ENCODE measurements at regions of chr7 and their contacts with region 1.

Region 1: DNA sequence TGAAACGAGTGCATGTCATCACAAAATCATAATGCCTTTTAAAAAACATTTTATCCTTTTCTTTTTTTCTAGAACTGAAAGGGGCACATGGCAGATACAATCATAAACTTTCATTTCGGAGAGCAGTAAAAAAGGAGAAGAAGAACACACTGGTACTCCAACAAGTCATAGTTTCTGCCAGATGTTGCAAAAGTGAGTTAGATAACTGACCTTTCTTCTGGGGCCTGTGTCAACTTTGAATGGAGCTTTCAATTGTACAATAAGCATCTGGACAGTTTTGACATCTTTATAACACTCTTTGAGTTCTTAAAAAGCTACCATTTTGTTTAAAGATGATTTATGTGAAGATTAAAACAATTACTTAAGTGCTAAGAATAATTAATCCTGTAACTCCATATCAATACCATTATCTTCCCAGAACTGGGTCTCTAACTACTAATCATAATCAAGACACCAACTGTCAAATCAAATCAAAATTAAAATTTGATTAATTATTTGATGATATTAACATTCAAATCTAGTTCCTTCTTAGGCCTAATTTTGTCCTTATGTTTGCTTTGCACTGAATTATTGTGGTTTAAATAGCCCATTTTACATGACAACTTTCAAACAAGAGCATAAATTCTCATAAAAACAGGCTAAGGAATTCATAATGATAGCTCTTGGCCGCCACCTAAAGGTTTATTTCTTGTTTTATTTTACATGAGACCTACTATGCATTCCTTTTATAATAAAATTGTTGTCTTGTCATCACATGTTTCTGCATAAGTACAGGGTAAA is 19.5 kb upstream of the ITGB8 start:
- DNase-seq: peak; percentile 72
- ATAC-seq: peak; percentile 45
- H3K4me3 ChIP-seq: no peak overlapping the region
- H3K4me3 Mint-ChIP-seq: no peak overlapping the region
- H3K27ac ChIP-seq: no peak overlapping the region
- H3K27ac Mint-ChIP-seq: no peak overlapping the region
- H3K4me1 ChIP-seq: peaks cover 0 to 3% of the 10 kb centered on the region in 2 donors
- H3K4me1 Mint-ChIP-seq: peaks cover 13% of the 10 kb centered on the region
- H3K27me3 ChIP-seq: no peaks in the 10 kb centered on the region
- H3K27me3 Mint-ChIP-seq: no peaks in the 10 kb centered on the region
- CTCF ChIP-seq: peak; percentile 79

Region 2: DNA sequence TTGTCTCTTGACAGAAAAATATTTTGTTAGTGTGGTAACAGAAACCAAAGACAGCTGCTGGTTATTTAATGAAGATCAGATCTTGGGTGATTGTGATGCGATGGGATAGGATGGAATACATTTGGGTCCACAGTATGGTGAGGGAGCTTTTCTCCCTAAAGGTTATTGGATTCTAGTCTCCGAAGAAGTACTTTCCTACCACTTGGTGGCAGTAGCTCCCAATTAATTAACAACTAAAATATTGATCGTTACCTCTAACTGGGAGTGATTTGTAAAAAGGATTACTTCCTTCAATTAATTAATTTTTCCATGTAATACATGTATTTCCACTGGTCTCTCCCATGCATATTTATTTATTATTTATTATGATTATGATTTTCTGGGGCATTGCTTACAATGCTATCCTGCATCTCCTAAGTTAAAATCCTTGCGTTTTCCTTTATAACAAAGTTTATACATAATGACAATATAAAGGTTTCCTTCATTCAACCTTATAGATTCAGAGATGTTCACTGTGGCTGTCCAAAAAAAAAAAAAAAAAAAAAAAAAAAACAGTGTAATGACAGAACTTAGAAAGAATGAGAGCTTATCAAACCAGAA is 563.3 kb before region 1 on chr7:
- CTCF ChIA-PET with region 1: interaction called, 13 read pairs
- POLR2A ChIA-PET with region 1: no interaction called
- intact Hi-C with region 1: loop called (anchors 1 kb)
- DNase-seq: peak; percentile 43
- ATAC-seq: no peak
- H3K4me3 ChIP-seq: no peak overlapping the region
- H3K4me3 Mint-ChIP-seq: no peak overlapping the region
- H3K27ac ChIP-seq: no peak overlapping the region
- H3K27ac Mint-ChIP-seq: no peak overlapping the region
- H3K4me1 ChIP-seq: no peaks in the 10 kb centered on the region
- H3K4me1 Mint-ChIP-seq: no peaks in the 10 kb centered on the region
- H3K27me3 ChIP-seq: no peaks in the 10 kb centered on the region
- H3K27me3 Mint-ChIP-seq: peaks cover 4% of the 10 kb centered on the region
- CTCF ChIP-seq: peak; percentile 76

Region 3: GRCh38 chr7:19982841-19983835 is 328.0 kb before region 1 on chr7:
- CTCF ChIA-PET with region 1: interaction called, 67 read pairs
- POLR2A ChIA-PET with region 1: no interaction called
- intact Hi-C with region 1: loop called (anchors 1 kb)
- DNase-seq: peak; percentile 55
- ATAC-seq: no peak
- H3K4me3 ChIP-seq: no peak overlapping the region
- H3K4me3 Mint-ChIP-seq: no peak overlapping the region
- H3K27ac ChIP-seq: no peak overlapping the region
- H3K27ac Mint-ChIP-seq: no peak overlapping the region
- H3K4me1 ChIP-seq: no peaks in the 10 kb centered on the region
- H3K4me1 Mint-ChIP-seq: no peaks in the 10 kb centered on the region
- H3K27me3 ChIP-seq: no peaks in the 10 kb centered on the region
- H3K27me3 Mint-ChIP-seq: no peaks in the 10 kb centered on the region
- CTCF ChIP-seq: peak; percentile 47

Region 4: DNA sequence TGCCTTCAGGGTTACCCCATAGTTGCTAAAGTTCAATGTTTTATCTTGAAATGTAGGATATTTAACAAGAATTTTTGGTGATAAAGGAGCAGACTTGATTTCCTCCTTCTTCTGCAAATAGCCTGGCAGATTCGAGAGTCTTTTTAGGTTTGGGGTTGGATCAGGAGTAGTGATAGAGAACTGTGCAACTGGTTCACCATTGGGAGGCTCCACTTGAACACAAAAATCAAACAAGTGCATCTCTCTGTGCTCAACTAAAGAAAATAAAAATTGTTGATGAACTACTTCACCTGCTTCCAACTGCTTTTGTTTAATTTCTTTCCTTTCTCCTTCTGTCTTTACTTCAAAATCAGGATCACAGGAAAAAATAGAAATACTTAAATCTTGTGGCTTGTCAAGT is 152.5 kb before region 1 on chr7:
- CTCF ChIA-PET with region 1: interaction called, 76 read pairs
- POLR2A ChIA-PET with region 1: no interaction called
- intact Hi-C with region 1: loop called (anchors 1 kb)
- DNase-seq: peak; percentile 42
- ATAC-seq: peak; percentile 28
- H3K4me3 ChIP-seq: no peak overlapping the region
- H3K4me3 Mint-ChIP-seq: no peak overlapping the region
- H3K27ac ChIP-seq: no peak overlapping the region
- H3K27ac Mint-ChIP-seq: no peak overlapping the region
- H3K4me1 ChIP-seq: no peaks in the 10 kb centered on the region
- H3K4me1 Mint-ChIP-seq: peaks cover 5% of the 10 kb centered on the region
- H3K27me3 ChIP-seq: no peaks in the 10 kb centered on the region
- H3K27me3 Mint-ChIP-seq: no peaks in the 10 kb centered on the region
- CTCF ChIP-seq: peak; percentile 29

Region 5: GRCh38 chr7:20219446-20220292 is 91.5 kb before region 1 on chr7:
- CTCF ChIA-PET with region 1: interaction called, 20 read pairs
- POLR2A ChIA-PET with region 1: no interaction called
- intact Hi-C with region 1: loop called (anchors 2 kb)
- DNase-seq: peak; percentile 93
- ATAC-seq: peak; percentile 77
- H3K4me3 ChIP-seq: peak overlapping the region in 4 of 5 experiments; percentile 15 to 55 (median 26)
- H3K4me3 Mint-ChIP-seq: peak overlapping the region; percentile 80
- H3K27ac ChIP-seq: peak overlapping the region; percentile 88
- H3K27ac Mint-ChIP-seq: peak overlapping the region; percentile 94
- H3K4me1 ChIP-seq: peaks cover 45 to 53% of the 10 kb centered on the region in 2 donors
- H3K4me1 Mint-ChIP-seq: peaks cover 61% of the 10 kb centered on the region
- H3K27me3 ChIP-seq: no peaks in the 10 kb centered on the region
- H3K27me3 Mint-ChIP-seq: no peaks in the 10 kb centered on the region
- CTCF ChIP-seq: no peak

Region 6: GRCh38 chr7:20598459-20599309 is 287.5 kb after region 1 on chr7:
- CTCF ChIA-PET with region 1: interaction called, 7 read pairs
- POLR2A ChIA-PET with region 1: no interaction called
- intact Hi-C with region 1: loop called (anchors 5 kb)
- DNase-seq: peak; percentile 70
- ATAC-seq: peak; percentile 63
- H3K4me3 ChIP-seq: no peak overlapping the region
- H3K4me3 Mint-ChIP-seq: no peak overlapping the region
- H3K27ac ChIP-seq: no peak overlapping the region
- H3K27ac Mint-ChIP-seq: no peak overlapping the region
- H3K4me1 ChIP-seq: peaks cover 3% of the 10 kb centered on the region in 2 donors
- H3K4me1 Mint-ChIP-seq: peaks cover 2% of the 10 kb centered on the region
- H3K27me3 ChIP-seq: peaks cover 0 to 11% (median 7%) of the 10 kb centered on the region in 4 experiments
- H3K27me3 Mint-ChIP-seq: peaks cover 19% of the 10 kb centered on the region
- CTCF ChIP-seq: peak; percentile 89

Region 7: GRCh38 chr7:21383227-21384220 is 1072.4 kb after region 1 on chr7:
- CTCF ChIA-PET with region 1: no interaction called
- POLR2A ChIA-PET with region 1: no interaction called
- intact Hi-C with region 1: no loop called
- DNase-seq: no peak
- ATAC-seq: no peak
- H3K4me3 ChIP-seq: no peak overlapping the region
- H3K4me3 Mint-ChIP-seq: no peak overlapping the region
- H3K27ac ChIP-seq: no peak overlapping the region
- H3K27ac Mint-ChIP-seq: no peak overlapping the region
- H3K4me1 ChIP-seq: no peaks in the 10 kb centered on the region
- H3K4me1 Mint-ChIP-seq: peaks cover 6% of the 10 kb centered on the region
- H3K27me3 ChIP-seq: no peaks in the 10 kb centered on the region
- H3K27me3 Mint-ChIP-seq: no peaks in the 10 kb centered on the region
- CTCF ChIP-seq: no peak